Activated naive CD4-positive, alpha-beta T cell treated with anti-CD3 and anti-CD28 coated beads, Interleukin-2, amount 10 ng/mL, durations not matched to agents 7 days and 5 days (primary cell): ENCODE measurements at regions of chr10 and their contacts with region 1.

Region 1: DNA sequence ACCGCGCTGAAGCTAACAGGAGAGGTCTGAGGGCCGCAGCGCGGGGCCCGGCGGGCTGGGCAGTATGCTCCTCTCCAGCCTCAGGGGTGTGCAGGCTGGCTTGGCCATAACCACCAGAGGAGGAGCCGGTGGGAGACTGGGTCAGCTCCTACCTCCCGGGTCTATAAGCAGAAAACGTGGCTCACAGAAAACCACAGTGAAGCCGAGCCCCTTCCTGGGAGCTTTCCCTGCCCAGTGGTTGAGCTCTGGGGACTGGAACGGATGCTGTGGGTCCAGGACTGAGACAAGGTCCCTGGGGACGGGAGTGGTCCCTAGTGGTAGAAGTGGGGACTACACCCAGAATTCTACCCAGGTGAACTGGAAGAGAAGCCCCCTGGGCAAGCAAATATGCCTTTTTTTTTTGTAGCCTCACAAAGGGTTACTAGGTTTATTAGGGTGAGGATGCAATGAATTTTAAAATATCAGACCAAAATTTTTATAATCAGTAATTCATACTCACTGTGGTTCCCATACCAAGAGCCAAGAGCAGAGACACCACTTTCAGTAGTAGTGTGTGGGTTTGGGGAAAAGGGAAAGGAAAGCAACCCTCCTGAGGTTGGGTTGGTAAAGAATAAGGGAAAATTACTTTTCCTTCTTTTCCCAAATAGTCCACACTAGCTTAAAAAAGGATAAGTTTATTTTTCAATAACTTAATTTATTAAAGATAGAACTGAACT is 67.9 kb upstream of the PRKCQ start:
- DNase-seq: peak; percentile 81
- H3K4me3 Mint-ChIP-seq: no peak overlapping the region
- H3K27ac Mint-ChIP-seq: no peak overlapping the region
- H3K4me1 Mint-ChIP-seq: peaks cover 45% of the 10 kb centered on the region
- H3K27me3 Mint-ChIP-seq: peaks cover 6% of the 10 kb centered on the region

Region 2: DNA sequence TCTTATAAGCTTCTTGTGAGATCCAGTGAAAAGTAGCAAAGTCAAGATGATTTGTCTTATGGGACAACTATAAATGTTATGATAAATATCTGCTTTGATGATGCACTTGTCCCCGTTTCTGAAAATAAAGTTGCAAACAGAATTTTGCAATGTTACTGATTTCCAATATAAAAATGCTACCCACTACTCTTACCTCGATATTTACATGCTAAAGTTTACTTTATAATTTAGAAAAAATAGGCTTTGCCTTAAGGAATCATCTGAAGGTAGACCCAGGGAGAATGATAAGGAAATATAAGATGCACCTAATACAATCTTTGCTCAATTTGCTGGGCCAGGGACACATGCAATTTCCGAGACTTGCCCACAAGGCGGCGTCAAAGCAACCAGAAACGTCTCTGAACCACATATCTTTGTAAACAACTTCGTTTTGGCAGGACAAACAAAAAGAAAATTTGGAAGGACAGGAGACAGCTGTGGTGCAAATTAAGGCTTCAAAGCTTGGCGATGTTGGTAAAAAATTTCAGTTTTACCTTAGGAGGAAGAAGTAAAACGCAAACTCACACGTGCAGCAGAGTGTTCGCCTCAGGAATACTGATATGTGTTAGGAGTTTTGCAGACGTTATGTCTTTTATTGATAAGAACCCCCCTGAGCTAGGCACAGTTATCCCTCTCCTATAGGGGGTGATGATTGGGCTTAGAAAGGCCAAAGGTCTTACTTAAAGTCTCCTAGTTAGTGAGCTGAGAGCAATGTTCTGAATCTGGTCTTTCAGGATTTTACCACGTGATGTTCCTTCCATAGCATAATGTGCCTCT is 202.3 kb before region 1 on chr10:
- CTCF ChIA-PET with region 1: interaction called, 10 read pairs
- DNase-seq: peak; percentile 81
- H3K4me3 Mint-ChIP-seq: no peak overlapping the region
- H3K27ac Mint-ChIP-seq: peak overlapping the region; percentile 34
- H3K4me1 Mint-ChIP-seq: peaks cover 42% of the 10 kb centered on the region
- H3K27me3 Mint-ChIP-seq: no peaks in the 10 kb centered on the region

Region 3: DNA sequence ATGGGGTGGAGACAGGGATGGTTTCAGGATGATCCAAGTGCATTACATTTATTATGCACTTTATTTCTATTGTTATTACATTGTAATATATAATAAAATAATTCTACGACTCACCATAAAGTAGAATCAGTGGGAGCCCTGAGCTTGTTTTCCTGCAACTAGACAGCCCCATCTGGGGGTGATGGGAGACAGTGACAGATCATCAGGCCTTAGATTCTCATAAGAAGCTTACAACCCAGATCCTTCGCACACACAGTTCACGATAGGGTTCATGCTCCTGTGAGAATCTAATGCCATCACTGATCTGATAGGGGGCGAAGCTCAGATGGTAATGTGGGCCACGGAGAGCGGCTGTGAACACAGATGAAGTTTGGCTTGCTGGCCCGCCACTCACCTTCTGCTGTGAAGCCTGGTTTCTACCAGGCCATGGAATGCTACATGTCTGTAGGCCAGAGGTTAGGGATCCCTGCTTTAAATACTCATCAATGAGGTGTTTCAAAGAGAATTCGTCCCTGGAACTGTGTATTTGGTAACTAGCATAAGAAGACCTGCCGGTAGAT is 46.6 kb before region 1 on chr10:
- CTCF ChIA-PET with region 1: interaction called, 11 read pairs
- DNase-seq: peak; percentile 59
- H3K4me3 Mint-ChIP-seq: peak overlapping the region; percentile 51
- H3K27ac Mint-ChIP-seq: peak overlapping the region; percentile 92
- H3K4me1 Mint-ChIP-seq: peaks cover 90% of the 10 kb centered on the region
- H3K27me3 Mint-ChIP-seq: no peaks in the 10 kb centered on the region

Region 4: DNA sequence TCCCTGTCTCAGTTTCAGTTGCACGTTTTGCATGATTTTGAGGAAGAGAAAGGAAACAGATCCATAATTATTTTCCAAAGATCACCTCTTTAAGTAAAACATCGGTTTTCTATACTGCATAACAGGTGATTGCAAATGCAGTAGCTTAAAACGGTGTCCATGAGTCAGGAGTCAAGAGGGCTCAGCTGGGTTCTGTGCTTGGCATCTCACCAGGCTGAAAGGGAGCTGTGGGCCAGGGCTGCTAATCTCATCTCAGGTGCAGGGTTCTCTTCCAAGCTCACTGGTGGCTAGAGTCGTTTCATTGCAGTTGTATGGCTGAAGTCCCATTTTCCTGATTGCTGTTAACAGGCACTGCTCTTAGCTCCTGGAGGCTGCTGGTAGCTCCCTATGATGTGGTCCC is 10.9 kb before region 1 on chr10:
- CTCF ChIA-PET with region 1: interaction called, 12 read pairs
- DNase-seq: no peak
- H3K4me3 Mint-ChIP-seq: no peak overlapping the region
- H3K27ac Mint-ChIP-seq: no peak overlapping the region
- H3K4me1 Mint-ChIP-seq: peaks cover 42% of the 10 kb centered on the region
- H3K27me3 Mint-ChIP-seq: peaks cover 3% of the 10 kb centered on the region

Region 5: DNA sequence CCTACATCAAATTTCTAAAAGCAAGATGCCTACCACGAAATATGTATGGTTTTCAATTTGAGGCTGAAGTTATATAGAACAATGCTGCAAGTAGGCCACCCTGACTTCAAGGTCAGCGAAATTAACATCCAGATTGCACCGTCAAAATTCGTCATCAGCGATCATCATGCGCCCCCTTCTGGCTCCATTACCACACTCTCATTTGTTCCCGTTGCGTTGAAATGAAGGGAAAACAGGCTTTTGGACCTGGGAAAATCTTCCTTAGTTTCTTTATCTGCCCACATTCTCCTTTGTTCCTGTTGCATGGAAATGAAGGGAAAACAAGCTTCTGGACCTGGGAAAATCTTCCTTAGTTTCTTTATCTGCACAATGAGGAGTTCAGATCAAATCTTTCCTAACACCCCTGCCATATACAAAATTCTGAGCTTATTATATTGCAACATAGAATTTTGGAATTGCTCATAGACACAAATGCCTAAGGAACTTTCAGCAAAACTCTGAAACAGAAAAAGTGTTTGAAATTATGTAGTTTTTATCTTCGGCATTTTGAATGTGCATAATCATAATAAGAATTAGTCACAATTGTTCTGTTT is 30.3 kb after region 1 on chr10:
- CTCF ChIA-PET with region 1: no interaction called
- DNase-seq: peak; percentile 74
- H3K4me3 Mint-ChIP-seq: no peak overlapping the region
- H3K27ac Mint-ChIP-seq: no peak overlapping the region
- H3K4me1 Mint-ChIP-seq: peaks cover 6% of the 10 kb centered on the region
- H3K27me3 Mint-ChIP-seq: peaks cover 36% of the 10 kb centered on the region